ENCODE measurements at regions of chr6 and their contacts with region 1.

Region 1: GRCh38 chr6:43506667-43507471 is 3.3 kb downstream of the LRRC73 start:
- DNase-seq: peak; percentile 83
- H3K4me3 Mint-ChIP-seq: no peak overlapping the region
- H3K27ac Mint-ChIP-seq: no peak overlapping the region
- H3K4me1 Mint-ChIP-seq: peaks cover 13% of the 10 kb centered on the region
- H3K27me3 Mint-ChIP-seq: peaks cover 16% of the 10 kb centered on the region

Region 2: GRCh38 chr6:43427406-43428111 is 79.3 kb before region 1 on chr6 and contains the start of gene ABCC10:
- CTCF ChIA-PET with region 1: no interaction called
- POLR2A ChIA-PET with region 1: no interaction called
- DNase-seq: peak; percentile 97
- H3K4me3 Mint-ChIP-seq: peak within 1 kb of the TSS; percentile 95
- H3K27ac Mint-ChIP-seq: peak within 1 kb of the TSS; percentile 97
- H3K4me1 Mint-ChIP-seq: peaks cover 23% of the 10 kb centered on the region
- H3K27me3 Mint-ChIP-seq: peaks cover under 1% of the 10 kb centered on the region
- total RNA-seq, gene ABCC10: 47.1 to 53.2 TPM

Region 3: GRCh38 chr6:43454696-43455530 is 52.0 kb before region 1 on chr6:
- CTCF ChIA-PET with region 1: interaction called, 16 read pairs
- POLR2A ChIA-PET with region 1: no interaction called
- DNase-seq: peak; percentile 12
- H3K4me3 Mint-ChIP-seq: peak overlapping the region; percentile 70
- H3K27ac Mint-ChIP-seq: no peak overlapping the region
- H3K4me1 Mint-ChIP-seq: peaks cover 12% of the 10 kb centered on the region
- H3K27me3 Mint-ChIP-seq: peaks cover 31% of the 10 kb centered on the region

Region 4: DNA sequence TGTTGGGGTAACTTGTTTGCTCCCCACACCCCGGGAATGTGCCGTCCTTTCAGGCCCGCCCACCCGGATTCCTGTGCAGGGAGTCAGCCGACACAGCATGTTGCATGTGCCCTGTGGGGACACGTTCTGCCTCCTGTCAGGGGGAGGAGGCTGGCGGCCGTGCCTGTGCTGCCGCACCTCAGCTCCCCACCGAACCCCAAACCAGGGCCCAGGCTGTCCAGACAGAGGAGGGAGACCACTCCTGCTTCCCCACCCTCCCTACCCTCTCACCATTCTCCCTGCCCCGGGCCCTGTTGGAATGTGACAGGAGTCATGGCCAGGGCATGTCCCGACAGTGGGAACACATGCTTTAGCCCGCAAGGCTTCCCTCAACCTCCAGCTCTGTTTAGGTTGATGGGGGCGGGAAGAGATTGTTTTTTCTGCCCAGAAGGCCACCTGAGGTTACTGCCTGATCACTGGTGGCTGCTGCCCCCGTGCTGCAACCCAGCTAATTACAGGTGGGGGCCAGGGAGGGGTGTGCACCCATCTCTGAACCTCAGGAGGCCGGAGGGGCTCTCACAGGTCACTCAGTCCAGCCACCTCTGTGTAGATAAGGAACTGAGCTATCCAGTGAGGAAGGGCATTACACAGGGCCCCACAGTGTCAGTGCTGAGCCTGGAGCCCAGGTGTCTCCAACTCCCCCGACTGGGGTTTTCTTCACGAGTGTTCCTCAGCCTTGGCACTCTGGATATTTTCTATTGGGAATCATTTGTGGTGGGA is 10.3 kb before region 1 on chr6:
- CTCF ChIA-PET with region 1: interaction called, 54 read pairs
- POLR2A ChIA-PET with region 1: no interaction called
- DNase-seq: no peak
- H3K4me3 Mint-ChIP-seq: no peak overlapping the region
- H3K27ac Mint-ChIP-seq: no peak overlapping the region
- H3K4me1 Mint-ChIP-seq: peaks cover 19% of the 10 kb centered on the region
- H3K27me3 Mint-ChIP-seq: no peaks in the 10 kb centered on the region

Region 5: DNA sequence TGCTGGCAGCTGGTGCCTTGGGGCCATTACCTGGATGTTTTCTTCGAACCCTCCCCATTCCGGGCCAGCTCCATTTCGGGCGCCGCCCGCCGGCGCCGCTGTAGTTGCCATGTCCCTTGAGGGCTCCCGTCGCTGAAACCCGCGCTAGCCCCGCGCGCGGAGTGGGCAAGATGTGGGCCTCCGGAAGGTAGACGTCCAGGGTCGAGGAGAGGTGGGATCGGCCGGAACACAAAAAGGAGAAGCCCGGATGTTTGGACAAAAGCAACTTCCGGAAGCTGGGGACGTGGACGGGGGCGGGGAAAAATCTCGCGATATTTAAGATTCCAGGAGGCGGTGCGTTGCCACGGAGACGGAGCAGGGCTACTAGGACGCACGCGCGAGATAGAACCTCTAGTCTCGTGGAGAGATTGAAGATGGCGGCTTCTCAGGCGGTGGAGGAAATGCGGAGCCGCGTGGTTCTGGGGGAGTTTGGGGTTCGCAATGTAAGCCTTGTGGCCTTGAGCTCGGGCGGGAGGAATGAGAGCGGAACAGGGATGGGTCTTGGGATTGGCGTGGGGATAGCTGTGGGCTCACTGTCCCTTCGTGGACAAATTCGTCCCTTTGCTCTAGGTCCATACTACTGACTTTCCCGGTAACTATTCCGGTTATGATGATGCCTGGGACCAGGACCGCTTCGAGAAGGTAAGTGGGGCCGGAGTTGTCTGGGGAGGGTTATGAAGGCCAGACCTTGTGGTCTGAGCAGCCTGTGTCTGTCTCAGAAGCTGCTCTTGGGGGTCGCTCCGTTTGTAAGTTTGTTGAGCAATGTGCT is 10.0 kb after region 1 on chr6 and contains the starts of genes POLR1C and YIPF3:
- CTCF ChIA-PET with region 1: interaction called, 28 read pairs
- POLR2A ChIA-PET with region 1: no interaction called
- DNase-seq: peak; percentile 98
- H3K4me3 Mint-ChIP-seq: no peak within 1 kb of the TSS
- H3K27ac Mint-ChIP-seq: no peak within 1 kb of the TSS
- H3K4me1 Mint-ChIP-seq: peaks cover 27% of the 10 kb centered on the region
- H3K27me3 Mint-ChIP-seq: no peaks in the 10 kb centered on the region
- total RNA-seq, gene POLR1C: 23.1 to 33.4 TPM
- total RNA-seq, gene YIPF3: 68.1 to 71.7 TPM

Measured in activated CD4-positive, alpha-beta T cell treated with anti-CD3 and anti-CD28 coated beads, Interleukin-2, amount 10 ng/mL, durations not matched to agents 7 days and 5 days (primary cell).